Activated naive CD4-positive, alpha-beta T cell treated with anti-CD3 and anti-CD28 coated beads for 36 hours (primary cell): ENCODE measurements at regions of chr7 and their contacts with region 1.

Region 1: DNA sequence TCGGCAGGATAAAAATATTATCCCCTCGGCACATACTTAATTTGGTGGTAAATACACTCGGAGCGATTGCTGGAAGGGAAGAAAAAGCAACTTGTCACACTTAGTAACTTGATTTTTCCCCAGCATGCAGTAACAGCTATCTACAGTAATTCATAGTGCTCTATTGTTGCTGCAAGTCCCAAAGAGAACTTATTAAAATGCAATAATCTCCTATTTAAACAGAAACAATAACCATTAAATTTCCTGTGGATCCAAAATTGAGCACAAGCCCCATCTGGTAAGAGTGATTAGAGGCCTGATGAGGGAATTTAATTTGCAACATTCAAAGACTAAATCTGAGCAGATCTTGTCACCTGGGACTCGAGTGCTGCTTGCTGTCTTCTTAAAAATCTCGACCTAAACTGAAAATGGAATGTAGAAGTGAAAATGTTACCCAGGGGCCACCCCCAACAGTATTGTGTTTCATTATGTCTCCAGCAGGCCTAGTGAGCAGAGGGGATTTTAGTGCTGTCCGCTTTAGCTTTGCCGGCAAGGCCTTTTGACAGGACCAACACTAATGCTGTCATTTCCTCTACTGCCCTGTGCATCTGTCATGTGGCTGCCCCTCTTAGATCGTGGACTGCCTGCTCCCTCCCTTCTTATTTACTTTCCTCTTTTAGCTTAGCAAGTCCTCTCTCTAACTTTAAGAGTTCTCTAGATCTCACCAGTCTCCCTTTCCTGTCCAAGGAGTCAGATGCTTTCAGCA is 639.7 kb downstream of the AUTS2 start:
- DNase-seq: no peak
- H3K4me3 Mint-ChIP-seq: no peak overlapping the region
- H3K27ac Mint-ChIP-seq: no peak overlapping the region
- H3K4me1 Mint-ChIP-seq: no peaks in the 10 kb centered on the region
- H3K27me3 Mint-ChIP-seq: no peaks in the 10 kb centered on the region

Region 2: GRCh38 chr7:70217571-70217970 is 20.4 kb before region 1 on chr7:
- CTCF ChIA-PET with region 1: no interaction called
- intact Hi-C with region 1: loop called (anchors 2 kb)
- DNase-seq: no peak
- H3K4me3 Mint-ChIP-seq: no peak overlapping the region
- H3K27ac Mint-ChIP-seq: no peak overlapping the region
- H3K4me1 Mint-ChIP-seq: no peaks in the 10 kb centered on the region
- H3K27me3 Mint-ChIP-seq: no peaks in the 10 kb centered on the region